Activated naive CD4-positive, alpha-beta T cell treated with anti-CD3 and anti-CD28 coated beads for 36 hours (primary cell): ENCODE measurements at regions of chr3 and their contacts with region 1.

Region 1: DNA sequence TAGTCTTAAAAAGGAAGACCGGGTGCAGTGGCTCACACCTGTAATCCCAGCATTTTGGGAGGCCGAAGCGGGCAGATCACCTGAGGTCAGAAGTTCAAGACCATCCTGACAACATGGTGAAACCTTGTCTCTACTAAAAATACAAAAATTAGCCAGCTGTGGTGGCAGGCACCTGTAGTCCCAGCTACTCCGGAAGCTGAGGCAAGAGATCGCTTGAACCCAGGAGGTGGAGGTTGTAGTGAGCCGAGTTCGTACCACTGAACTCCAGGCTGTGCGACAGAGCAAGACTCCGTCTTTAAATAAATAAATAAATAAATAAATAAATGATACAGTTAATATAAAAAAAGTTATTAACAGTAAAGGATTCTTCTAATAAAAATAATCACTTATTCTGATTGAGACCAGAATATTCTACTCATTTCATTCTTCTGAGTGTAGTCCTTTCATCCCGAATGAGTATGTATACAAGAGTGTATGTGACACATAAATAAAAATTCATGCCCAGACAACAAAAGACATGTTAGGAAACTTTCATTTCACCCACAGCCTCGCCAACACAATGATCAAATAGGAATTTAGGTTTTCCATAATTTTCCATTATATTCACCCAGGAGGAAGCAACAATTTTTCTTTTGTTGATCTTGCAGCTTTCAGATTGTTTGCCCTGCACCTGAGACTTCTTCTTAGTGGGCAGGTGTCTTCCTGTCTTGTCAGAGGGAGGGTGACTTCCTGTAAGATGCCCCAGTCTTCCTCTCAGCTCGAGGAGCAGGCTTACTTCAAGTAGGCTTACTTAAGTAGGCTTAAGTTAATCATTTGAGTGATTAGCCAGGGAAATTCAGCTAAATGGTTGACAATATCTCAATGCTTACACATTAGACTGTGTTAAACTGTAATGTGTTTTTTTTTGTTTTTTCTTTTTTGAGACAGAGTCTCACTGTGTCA is 7.8 kb upstream of the NUP210 start:
- DNase-seq: peak; percentile 71
- H3K4me3 Mint-ChIP-seq: peak overlapping the region; percentile 45
- H3K27ac Mint-ChIP-seq: peak overlapping the region; percentile 88
- H3K4me1 Mint-ChIP-seq: peaks cover 52% of the 10 kb centered on the region
- H3K27me3 Mint-ChIP-seq: no peaks in the 10 kb centered on the region

Region 2: GRCh38 chr3:13245615-13245978 is 182.3 kb before region 1 on chr3:
- CTCF ChIA-PET with region 1: no interaction called
- intact Hi-C with region 1: no loop called
- DNase-seq: no peak
- H3K4me3 Mint-ChIP-seq: no peak overlapping the region
- H3K27ac Mint-ChIP-seq: no peak overlapping the region
- H3K4me1 Mint-ChIP-seq: no peaks in the 10 kb centered on the region
- H3K27me3 Mint-ChIP-seq: no peaks in the 10 kb centered on the region

Region 3: DNA sequence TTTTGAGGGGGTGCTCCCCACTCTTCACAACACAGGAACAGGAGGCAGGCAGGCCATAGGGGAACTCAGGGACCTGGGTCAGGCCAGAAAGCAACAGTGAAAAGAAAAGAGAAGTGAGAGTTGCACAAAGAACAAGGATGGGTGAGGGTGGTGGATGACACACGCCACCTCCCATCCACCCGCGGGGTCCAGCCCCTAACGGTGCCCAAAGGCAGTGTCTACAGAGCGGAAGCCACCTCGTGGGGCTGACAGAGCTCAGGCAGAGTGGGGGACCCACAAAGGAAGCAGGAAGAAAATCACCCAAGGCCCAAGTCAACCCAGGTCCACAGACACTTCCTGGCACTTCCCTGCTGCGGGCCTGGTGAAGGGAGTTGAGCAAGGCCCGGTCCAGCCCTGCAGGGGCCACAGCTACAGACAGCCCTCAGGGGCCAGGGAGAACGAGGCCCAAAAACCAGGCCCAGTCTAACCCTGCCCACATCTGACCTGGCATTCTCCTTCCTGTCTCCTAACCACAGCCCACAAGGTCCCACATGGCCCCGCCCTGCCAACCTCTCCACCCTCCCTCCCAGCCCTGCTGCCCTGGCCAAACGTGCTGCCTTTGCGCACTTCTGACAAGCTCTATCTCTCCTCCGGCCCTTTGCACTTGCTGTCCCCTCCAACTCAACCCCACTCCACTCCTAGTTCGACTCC is 13.7 kb before region 1 on chr3:
- CTCF ChIA-PET with region 1: interaction called, 4 read pairs
- intact Hi-C with region 1: loop called (anchors 2 kb)
- DNase-seq: peak; percentile 78
- H3K4me3 Mint-ChIP-seq: peak overlapping the region; percentile 63
- H3K27ac Mint-ChIP-seq: peak overlapping the region; percentile 93
- H3K4me1 Mint-ChIP-seq: peaks cover 61% of the 10 kb centered on the region
- H3K27me3 Mint-ChIP-seq: no peaks in the 10 kb centered on the region